ENCODE measurements at regions of chr16 and their contacts with region 1.

Region 1: GRCh38 chr16:67017810-67018488 is 11.0 kb upstream of the CBFB start:
- DNase-seq: peak; percentile 91
- H3K4me3 Mint-ChIP-seq: no peak overlapping the region
- H3K27ac Mint-ChIP-seq: peak overlapping the region; percentile 57
- H3K4me1 Mint-ChIP-seq: peaks cover 41% of the 10 kb centered on the region
- H3K27me3 Mint-ChIP-seq: no peaks in the 10 kb centered on the region

Region 2: GRCh38 chr16:66977341-66978113 is 40.4 kb before region 1 on chr16:
- CTCF ChIA-PET with region 1: interaction called, 38 read pairs
- POLR2A ChIA-PET with region 1: interaction called, 81 read pairs
- DNase-seq: peak; percentile 92
- H3K4me3 Mint-ChIP-seq: no peak overlapping the region
- H3K27ac Mint-ChIP-seq: peak overlapping the region; percentile 64
- H3K4me1 Mint-ChIP-seq: peaks cover 58% of the 10 kb centered on the region
- H3K27me3 Mint-ChIP-seq: no peaks in the 10 kb centered on the region

Region 3: DNA sequence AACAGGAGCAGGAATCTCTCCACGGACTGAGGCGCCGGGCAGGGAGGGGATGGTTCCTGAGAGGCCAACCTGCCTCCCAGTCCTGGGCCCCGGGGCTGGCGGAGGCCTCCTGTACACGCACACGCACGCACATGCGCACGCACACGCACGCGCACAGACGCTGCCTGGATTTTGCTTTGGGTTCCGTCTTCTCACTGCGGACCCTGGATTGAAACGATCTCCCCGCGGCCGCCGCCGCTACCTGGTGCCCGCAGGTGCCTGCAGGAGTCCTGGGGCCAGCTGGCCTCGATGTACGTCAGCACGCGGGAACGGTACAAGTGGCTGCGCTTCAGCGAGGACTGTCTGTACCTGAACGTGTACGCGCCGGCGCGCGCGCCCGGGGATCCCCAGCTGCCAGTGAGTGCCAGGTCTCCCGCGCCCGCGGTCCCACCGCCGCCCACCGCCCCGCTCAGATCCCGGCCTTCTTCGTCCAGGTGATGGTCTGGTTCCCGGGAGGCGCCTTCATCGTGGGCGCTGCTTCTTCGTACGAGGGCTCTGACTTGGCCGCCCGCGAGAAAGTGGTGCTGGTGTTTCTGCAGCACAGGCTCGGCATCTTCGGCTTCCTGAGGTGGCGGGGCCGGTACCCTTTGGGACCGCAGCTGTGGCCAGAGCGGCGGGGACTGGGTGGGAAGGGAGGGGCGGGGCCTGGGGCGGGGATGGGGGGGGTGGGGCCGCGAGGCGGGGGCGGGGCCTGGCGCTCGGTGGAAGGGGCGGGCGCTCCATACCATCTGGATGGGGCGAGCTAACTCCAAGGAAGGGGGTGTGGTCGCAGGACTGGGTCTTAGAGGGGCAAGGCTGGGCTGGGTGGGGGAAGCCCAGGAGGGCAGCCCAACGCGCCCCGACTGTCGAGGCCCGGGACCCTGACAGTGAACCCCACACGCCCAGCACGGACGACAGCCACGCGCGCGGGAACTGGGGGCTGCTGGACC is 17.3 kb before region 1 on chr16:
- CTCF ChIA-PET with region 1: interaction called, 5 read pairs
- POLR2A ChIA-PET with region 1: interaction called, 32 read pairs
- DNase-seq: peak; percentile 71
- H3K4me3 Mint-ChIP-seq: peak overlapping the region; percentile 81
- H3K27ac Mint-ChIP-seq: peak overlapping the region; percentile 78
- H3K4me1 Mint-ChIP-seq: peaks cover 42% of the 10 kb centered on the region
- H3K27me3 Mint-ChIP-seq: no peaks in the 10 kb centered on the region

Region 4: GRCh38 chr16:67043420-67043819 is 25.5 kb after region 1 on chr16:
- CTCF ChIA-PET with region 1: interaction called, 12 read pairs
- POLR2A ChIA-PET with region 1: interaction called, 4 read pairs
- DNase-seq: no peak
- H3K4me3 Mint-ChIP-seq: no peak overlapping the region
- H3K27ac Mint-ChIP-seq: no peak overlapping the region
- H3K4me1 Mint-ChIP-seq: peaks cover 38% of the 10 kb centered on the region
- H3K27me3 Mint-ChIP-seq: no peaks in the 10 kb centered on the region

Region 5: GRCh38 chr16:67109407-67110135 is 91.6 kb after region 1 on chr16 and contains the start of gene PHAF1:
- CTCF ChIA-PET with region 1: interaction called, 88 read pairs
- POLR2A ChIA-PET with region 1: interaction called, 4 read pairs
- DNase-seq: peak; percentile 95
- H3K4me3 Mint-ChIP-seq: peak within 1 kb of the TSS; percentile 95
- H3K27ac Mint-ChIP-seq: peak within 1 kb of the TSS; percentile 68
- H3K4me1 Mint-ChIP-seq: peaks cover 29% of the 10 kb centered on the region
- H3K27me3 Mint-ChIP-seq: no peaks in the 10 kb centered on the region
- total RNA-seq, gene PHAF1: 12.4 to 13.3 TPM

Region 6: GRCh38 chr16:67183627-67184328 is 165.8 kb after region 1 on chr16 and contains the start of gene MATCAP1:
- CTCF ChIA-PET with region 1: interaction called, 25 read pairs
- POLR2A ChIA-PET with region 1: interaction called, 6 read pairs
- DNase-seq: peak; percentile 96
- H3K4me3 Mint-ChIP-seq: peak within 1 kb of the TSS; percentile 78
- H3K27ac Mint-ChIP-seq: no peak within 1 kb of the TSS
- H3K4me1 Mint-ChIP-seq: peaks cover 24% of the 10 kb centered on the region
- H3K27me3 Mint-ChIP-seq: peaks cover 10% of the 10 kb centered on the region
- total RNA-seq, gene MATCAP1: 63.9 to 70.9 TPM

Measured in activated CD4-positive, alpha-beta memory T cell treated with anti-CD3 and anti-CD28 coated beads, Interleukin-2, amount 10 ng/mL, durations not matched to agents 7 days and 5 days (primary cell).